ENCODE measurements at regions of chr6 and their contacts with region 1.

Region 1: GRCh38 chr6:25866011-25866410 is 8.0 kb downstream of the SLC17A3 start:
- DNase-seq: peak; percentile 25 to 52
- H3K4me3 ChIP-seq: no peak overlapping the region
- H3K27ac ChIP-seq: no peak overlapping the region
- H3K4me1 ChIP-seq: no peaks in the 10 kb centered on the region
- H3K27me3 ChIP-seq: no peaks in the 10 kb centered on the region
- CTCF ChIP-seq: no peak

Region 2: DNA sequence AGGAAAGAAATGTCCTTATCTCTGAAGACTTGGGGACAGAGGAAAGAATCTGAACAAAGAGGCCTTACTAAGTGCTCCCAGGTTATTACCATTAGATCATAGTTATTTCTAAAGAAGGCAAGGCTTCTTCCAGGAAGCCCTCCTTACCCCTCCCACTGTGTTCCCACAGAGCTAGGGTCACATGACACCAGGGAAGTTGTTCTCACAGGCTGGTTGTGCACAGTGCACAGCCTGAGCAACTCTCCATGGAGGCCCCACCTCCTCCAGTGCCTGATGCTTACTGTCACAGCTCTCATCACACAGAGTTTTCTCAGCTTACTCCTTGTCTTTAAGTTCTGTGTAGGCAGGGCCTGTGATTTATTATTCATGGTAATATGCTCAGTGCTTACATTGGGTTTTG is 282.9 kb before region 1 on chr6:
- CTCF ChIA-PET with region 1: no interaction called
- POLR2A ChIA-PET with region 1: no interaction called
- intact Hi-C with region 1: no loop called
- DNase-seq: no peak
- H3K4me3 ChIP-seq: no peak overlapping the region
- H3K27ac ChIP-seq: no peak overlapping the region
- H3K4me1 ChIP-seq: no peaks in the 10 kb centered on the region
- H3K27me3 ChIP-seq: no peaks in the 10 kb centered on the region
- CTCF ChIP-seq: no peak

Region 3: GRCh38 chr6:25844518-25844917 is 21.5 kb before region 1 on chr6:
- CTCF ChIA-PET with region 1: no interaction called
- POLR2A ChIA-PET with region 1: no interaction called
- intact Hi-C with region 1: loop called (anchors 2 kb)
- DNase-seq: no peak
- H3K4me3 ChIP-seq: no peak overlapping the region
- H3K27ac ChIP-seq: no peak overlapping the region
- H3K4me1 ChIP-seq: no peaks in the 10 kb centered on the region
- H3K27me3 ChIP-seq: no peaks in the 10 kb centered on the region
- CTCF ChIP-seq: no peak